AG04450 (cell line): ENCODE measurements at regions of chr10 and their contacts with region 1.

Region 1: DNA sequence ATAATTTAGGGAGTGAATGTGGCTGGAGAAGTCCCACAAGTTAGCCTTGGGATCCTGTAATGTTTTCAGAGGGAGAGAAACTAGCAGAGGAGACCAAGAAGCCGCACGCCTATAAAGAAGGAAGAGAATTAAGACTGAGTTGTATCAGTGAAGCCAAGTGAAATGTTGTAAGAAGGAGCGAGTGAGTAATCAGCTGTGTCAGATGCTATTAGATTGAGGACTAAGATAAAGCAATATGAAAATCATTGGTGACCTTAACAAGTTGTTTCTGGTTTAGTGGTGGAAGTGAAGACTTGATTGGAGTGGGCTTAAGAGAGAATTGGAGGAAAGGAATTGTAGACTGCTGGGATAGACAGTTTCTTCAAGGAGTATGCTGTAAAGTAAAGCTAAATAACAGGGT is 8.8 kb downstream of the CCSER2 start:
- DNase-seq: no peak
- H3K4me3 ChIP-seq: no peak overlapping the region
- H3K27ac ChIP-seq: peak overlapping the region; percentile 43
- H3K27me3 ChIP-seq: no peaks in the 10 kb centered on the region
- CTCF ChIP-seq: no peak

Region 2: GRCh38 chr10:84352251-84352842 is 15.1 kb after region 1 on chr10:
- CTCF ChIA-PET with region 1: interaction called, 11 read pairs
- POLR2A ChIA-PET with region 1: no interaction called
- DNase-seq: no peak
- H3K4me3 ChIP-seq: no peak overlapping the region
- H3K27ac ChIP-seq: no peak overlapping the region
- H3K27me3 ChIP-seq: no peaks in the 10 kb centered on the region
- CTCF ChIP-seq: peak; percentile 78